Activated CD4-positive, alpha-beta T cell treated with anti-CD3 and anti-CD28 coated beads, Interleukin-2, amount 10 ng/mL, durations not matched to agents 24 days and 14 days (primary cell): ENCODE measurements at regions of chr5 and their contacts with region 1.

Region 1: GRCh38 chr5:55037046-55037771 is 13.2 kb downstream of the GZMK start:
- DNase-seq: peak; percentile 90
- H3K4me3 Mint-ChIP-seq: peak overlapping the region; percentile 35
- H3K27ac Mint-ChIP-seq: peak overlapping the region; percentile 85
- H3K4me1 Mint-ChIP-seq: peaks cover 47% of the 10 kb centered on the region
- H3K27me3 Mint-ChIP-seq: no peaks in the 10 kb centered on the region

Region 2: DNA sequence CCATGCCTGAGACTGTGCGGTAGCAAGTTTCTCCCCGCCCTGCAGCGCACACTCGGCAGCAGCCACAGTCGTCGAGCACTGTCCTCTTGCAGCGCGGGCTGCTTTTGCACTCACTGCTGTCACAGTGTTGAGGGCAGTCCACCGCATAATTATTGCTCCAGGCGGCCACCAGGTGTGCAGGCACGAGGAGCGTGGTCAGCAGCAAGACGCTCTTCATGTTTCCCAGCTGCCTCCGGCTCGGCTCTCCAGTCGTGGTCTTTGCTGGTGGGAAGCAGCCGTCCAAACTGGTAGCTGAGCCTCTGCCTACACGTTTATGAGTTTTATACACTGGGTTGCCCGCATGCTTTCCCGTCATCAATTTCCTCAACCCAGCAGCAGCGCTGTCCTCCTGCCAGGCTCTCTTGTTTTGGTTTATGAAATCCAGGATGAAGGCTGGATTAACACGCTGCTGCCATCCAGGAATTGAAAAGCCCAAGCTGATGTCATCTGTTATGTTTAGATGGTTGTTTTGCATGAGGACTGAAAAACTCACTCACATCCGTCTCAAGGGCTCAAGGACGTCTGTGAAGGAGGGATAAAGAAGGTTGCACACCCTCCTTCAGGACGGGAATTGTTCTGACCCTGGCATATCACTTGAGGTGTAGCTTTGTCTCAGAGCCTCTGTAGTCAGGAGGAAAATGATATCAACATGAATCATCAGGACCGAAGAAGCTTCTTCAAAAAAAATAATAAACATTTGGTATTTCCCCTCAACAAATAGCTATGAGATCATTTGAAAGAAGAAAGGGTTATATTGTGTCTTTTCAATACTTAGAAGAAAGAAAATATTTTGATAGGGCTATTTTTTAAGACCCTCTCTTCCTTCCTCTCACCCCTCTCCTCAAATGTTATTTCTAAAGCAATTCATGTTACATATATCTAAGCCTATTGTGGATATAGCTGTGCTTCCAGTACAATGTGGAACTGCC is 51.6 kb before region 1 on chr5 and contains the start of gene ESM1:
- intact Hi-C with region 1: loop called (anchors 10 kb)
- DNase-seq: no peak
- H3K4me3 Mint-ChIP-seq: peak within 1 kb of the TSS; percentile 31
- H3K27ac Mint-ChIP-seq: no peak within 1 kb of the TSS
- H3K4me1 Mint-ChIP-seq: peaks cover 56% of the 10 kb centered on the region
- H3K27me3 Mint-ChIP-seq: peaks cover 30% of the 10 kb centered on the region
- total RNA-seq, gene ESM1: not detected in 2 replicates

Region 3: DNA sequence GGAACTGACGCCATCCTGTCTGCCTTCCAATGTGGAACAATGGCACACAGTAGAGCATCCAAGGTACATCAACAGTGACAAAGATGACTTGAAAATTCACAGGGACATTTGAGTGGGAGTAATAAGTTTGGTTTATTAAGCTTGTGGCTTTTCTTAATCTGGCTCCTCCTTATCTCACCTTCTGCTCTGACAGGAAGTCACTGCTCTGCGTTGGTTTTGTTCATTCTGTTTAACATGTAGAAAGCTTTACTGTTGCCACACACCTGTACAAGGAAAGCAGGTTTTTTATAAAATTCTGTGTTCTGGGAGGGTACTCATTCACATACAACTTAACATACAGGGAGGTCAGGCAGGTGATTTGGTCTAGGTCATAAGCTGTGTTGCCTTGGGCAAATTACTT is 14.8 kb before region 1 on chr5:
- intact Hi-C with region 1: loop called (anchors 1 kb)
- DNase-seq: no peak
- H3K4me3 Mint-ChIP-seq: no peak overlapping the region
- H3K27ac Mint-ChIP-seq: no peak overlapping the region
- H3K4me1 Mint-ChIP-seq: peaks cover 50% of the 10 kb centered on the region
- H3K27me3 Mint-ChIP-seq: no peaks in the 10 kb centered on the region

Region 4: DNA sequence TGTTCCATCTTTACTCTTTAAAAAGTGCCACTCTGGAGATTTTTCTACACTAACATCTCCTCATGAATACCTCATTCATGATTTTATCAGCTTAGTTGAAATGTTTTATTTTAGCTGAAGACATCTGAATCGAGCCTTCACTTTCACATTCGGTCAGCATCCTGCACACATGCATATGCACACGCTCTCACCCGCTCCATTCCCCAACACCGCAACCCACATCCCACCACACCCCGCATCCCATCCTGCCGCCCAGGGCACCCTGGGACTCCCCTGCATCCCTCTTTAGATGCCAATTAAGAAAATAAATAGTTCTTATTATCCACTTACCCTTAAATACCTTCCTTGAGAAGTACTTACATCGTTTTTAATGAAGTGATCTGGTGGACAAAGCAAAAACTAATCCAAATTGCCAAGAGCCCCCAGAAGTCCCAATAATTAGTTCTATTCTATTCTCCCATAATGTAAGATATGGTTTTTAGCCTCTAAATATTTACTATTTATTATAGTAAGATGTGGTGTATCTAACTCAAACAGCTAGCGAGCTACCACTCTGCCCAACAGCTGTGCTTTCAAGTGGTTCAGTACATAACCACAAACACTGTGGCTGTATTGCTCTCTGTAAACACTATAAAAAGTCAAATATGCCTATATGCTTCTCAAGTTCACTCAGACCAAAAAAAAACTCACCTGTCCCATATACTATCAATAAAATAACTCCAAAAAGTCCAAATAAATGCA is 25.0 kb after region 1 on chr5:
- intact Hi-C with region 1: loop called (anchors 1 kb)
- DNase-seq: peak; percentile 94
- H3K4me3 Mint-ChIP-seq: peak overlapping the region; percentile 85
- H3K27ac Mint-ChIP-seq: peak overlapping the region; percentile 94
- H3K4me1 Mint-ChIP-seq: peaks cover 68% of the 10 kb centered on the region
- H3K27me3 Mint-ChIP-seq: no peaks in the 10 kb centered on the region

Region 5: GRCh38 chr5:55102348-55102747 is 65.1 kb after region 1 on chr5 and contains the start of gene GZMA:
- intact Hi-C with region 1: loop called (anchors 1 kb)
- DNase-seq: peak; percentile 86
- H3K4me3 Mint-ChIP-seq: peak within 1 kb of the TSS; percentile 80
- H3K27ac Mint-ChIP-seq: peak within 1 kb of the TSS; percentile 89
- H3K4me1 Mint-ChIP-seq: peaks cover 79% of the 10 kb centered on the region
- H3K27me3 Mint-ChIP-seq: peaks cover 1% of the 10 kb centered on the region
- total RNA-seq, gene GZMA: 87.6 and 91.2 TPM in 2 replicates

Region 6: DNA sequence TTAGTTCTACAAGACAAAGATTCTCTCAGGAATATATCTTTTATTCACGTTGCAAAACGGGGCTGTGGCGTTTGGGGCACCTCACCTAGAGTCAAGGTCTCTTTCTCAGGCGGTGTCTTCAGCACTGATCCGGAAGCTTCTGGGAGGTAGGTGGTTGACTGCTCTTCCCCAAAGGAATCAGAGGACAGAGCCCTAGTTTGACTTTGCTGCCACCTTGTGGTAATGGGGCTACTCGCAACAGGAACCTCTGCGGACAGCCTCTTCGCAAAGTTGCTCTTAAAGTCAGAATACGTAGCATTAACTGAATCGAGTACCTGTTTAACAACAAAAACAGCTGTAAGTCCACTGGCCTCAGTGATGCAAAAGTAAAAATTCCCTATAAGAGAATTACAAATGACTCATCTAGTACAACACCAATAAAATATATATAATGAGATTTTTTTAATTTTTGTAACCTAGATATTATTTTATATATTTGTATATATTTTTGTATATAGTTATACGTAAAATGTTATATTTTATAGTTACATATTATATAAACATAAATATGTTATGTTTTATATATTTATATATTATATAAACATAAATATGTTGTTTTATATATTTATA is 109.4 kb after region 1 on chr5:
- intact Hi-C with region 1: loop called (anchors 2 kb)
- DNase-seq: peak; percentile 96
- H3K4me3 Mint-ChIP-seq: peak overlapping the region; percentile 53
- H3K27ac Mint-ChIP-seq: peak overlapping the region; percentile 62
- H3K4me1 Mint-ChIP-seq: peaks cover 32% of the 10 kb centered on the region
- H3K27me3 Mint-ChIP-seq: peaks cover 46% of the 10 kb centered on the region

Region 7: DNA sequence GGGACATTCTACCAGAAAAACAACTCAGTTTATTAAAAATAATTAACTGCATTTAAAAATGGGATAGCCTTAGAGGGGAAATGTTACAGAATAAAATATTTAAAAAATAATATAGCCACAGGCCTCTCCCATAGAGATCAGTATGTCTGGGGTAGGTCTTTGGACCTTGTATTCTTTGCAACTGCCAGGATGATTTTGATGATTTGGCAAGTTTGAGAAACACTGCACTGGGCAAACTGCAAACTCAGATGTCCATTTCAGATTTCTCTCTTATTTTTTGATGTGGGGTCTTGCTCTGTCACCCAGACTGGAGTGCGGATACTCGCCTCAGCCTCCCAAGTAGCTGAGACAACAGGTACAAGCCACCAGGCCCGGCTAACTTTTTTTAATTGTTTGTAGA is 221.1 kb after region 1 on chr5:
- intact Hi-C with region 1: no loop called
- DNase-seq: no peak
- H3K4me3 Mint-ChIP-seq: no peak overlapping the region
- H3K27ac Mint-ChIP-seq: no peak overlapping the region
- H3K4me1 Mint-ChIP-seq: no peaks in the 10 kb centered on the region
- H3K27me3 Mint-ChIP-seq: no peaks in the 10 kb centered on the region

Region 8: GRCh38 chr5:55286411-55286933 is 249.3 kb after region 1 on chr5:
- intact Hi-C with region 1: no loop called
- DNase-seq: peak; percentile 12
- H3K4me3 Mint-ChIP-seq: no peak overlapping the region
- H3K27ac Mint-ChIP-seq: no peak overlapping the region
- H3K4me1 Mint-ChIP-seq: no peaks in the 10 kb centered on the region
- H3K27me3 Mint-ChIP-seq: no peaks in the 10 kb centered on the region